Ascending aorta (tissue), 2 donors: ENCODE measurements at regions of chr16 and their contacts with region 1.

Region 1: GRCh38 chr16:46883690-46884512 is at the start of gene GPT2:
- DNase-seq: peak; percentile 87 to 99
- H3K4me3 ChIP-seq: peak within 1 kb of the TSS; percentile 84 to 93
- H3K27ac ChIP-seq: peak within 1 kb of the TSS; percentile 41 to 63
- H3K4me1 ChIP-seq: peaks cover 0 to 6% of the 10 kb centered on the region in 2 donors
- H3K27me3 ChIP-seq: no peaks in the 10 kb centered on the region
- CTCF ChIP-seq: peak in 1 of 3 experiments; percentile 10
- total RNA-seq, gene GPT2: 7.9 TPM

Region 2: GRCh38 chr16:46721885-46722284 is 162.0 kb before region 1 on chr16:
- intact Hi-C with region 1: no loop called
- DNase-seq: no peak
- H3K4me3 ChIP-seq: no peak overlapping the region
- H3K27ac ChIP-seq: no peak overlapping the region
- H3K4me1 ChIP-seq: no peaks in the 10 kb centered on the region
- H3K27me3 ChIP-seq: no peaks in the 10 kb centered on the region
- CTCF ChIP-seq: no peak

Region 3: DNA sequence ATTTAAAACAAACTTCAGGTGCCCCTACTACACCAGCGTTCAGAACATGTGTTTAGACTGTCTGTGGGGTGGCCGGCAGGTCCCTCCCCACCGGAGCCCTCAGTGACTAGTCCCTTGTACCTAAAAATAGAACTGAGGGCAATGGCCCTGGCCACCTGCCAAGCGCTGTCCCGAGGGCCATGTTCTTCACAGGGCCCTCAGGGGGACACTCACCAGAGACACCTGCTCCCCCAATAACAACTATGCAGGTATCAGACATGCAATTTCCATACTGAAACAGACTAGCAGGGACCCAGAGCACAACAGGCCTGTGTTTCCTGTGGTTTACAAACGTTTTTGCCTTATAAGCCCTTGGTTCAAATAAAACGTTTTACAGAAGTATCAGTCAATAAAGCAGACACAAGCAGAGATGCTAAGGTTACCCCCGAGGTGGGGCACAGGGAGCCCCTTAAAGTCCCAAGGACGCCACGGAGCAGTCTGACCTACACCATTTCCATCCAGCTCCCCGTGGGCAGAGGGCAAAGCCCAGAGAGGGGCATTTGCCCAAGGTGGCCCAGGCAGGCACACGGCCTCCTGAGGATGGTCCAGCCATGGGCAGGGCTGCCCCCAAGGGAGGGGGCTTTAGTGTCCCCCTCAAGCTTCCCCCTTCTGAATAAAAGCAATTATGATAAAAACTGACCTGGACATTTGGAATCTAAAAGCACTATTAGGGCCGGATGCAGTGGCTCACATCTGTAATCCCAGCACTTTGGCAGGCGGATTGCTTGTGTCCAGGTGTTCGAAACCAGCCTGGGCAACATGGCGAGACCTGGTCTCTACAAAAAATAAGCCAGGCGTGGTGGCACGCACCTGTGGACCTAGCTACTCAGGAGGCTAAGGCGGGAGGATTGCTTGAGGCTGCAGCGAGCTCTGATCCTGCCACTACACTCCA is 134.9 kb before region 1 on chr16:
- intact Hi-C with region 1: no loop called
- DNase-seq: no peak
- H3K4me3 ChIP-seq: no peak overlapping the region
- H3K27ac ChIP-seq: no peak overlapping the region
- H3K4me1 ChIP-seq: no peaks in the 10 kb centered on the region
- H3K27me3 ChIP-seq: no peaks in the 10 kb centered on the region
- CTCF ChIP-seq: no peak

Region 4: GRCh38 chr16:46853713-46854443 is 30.0 kb before region 1 on chr16:
- intact Hi-C with region 1: loop called (anchors 2 kb)
- DNase-seq: peak in 1 of 2 donors; percentile 73
- H3K4me3 ChIP-seq: no peak overlapping the region
- H3K27ac ChIP-seq: no peak overlapping the region
- H3K4me1 ChIP-seq: peaks cover 0 to 3% of the 10 kb centered on the region in 2 donors
- H3K27me3 ChIP-seq: no peaks in the 10 kb centered on the region
- CTCF ChIP-seq: peak; percentile 55 to 87 (median 80)

Region 5: GRCh38 chr16:46973207-46973995 is 89.5 kb after region 1 on chr16 and contains the start of gene DNAJA2:
- intact Hi-C with region 1: loop called (anchors 1 kb)
- DNase-seq: peak; percentile 47 to 94
- H3K4me3 ChIP-seq: peak within 1 kb of the TSS; percentile 87
- H3K27ac ChIP-seq: peak within 1 kb of the TSS; percentile 93 to 96
- H3K4me1 ChIP-seq: peaks cover 10 to 15% of the 10 kb centered on the region in 2 donors
- H3K27me3 ChIP-seq: no peaks in the 10 kb centered on the region
- CTCF ChIP-seq: no peak
- total RNA-seq, gene DNAJA2: 15.8 TPM

Region 6: DNA sequence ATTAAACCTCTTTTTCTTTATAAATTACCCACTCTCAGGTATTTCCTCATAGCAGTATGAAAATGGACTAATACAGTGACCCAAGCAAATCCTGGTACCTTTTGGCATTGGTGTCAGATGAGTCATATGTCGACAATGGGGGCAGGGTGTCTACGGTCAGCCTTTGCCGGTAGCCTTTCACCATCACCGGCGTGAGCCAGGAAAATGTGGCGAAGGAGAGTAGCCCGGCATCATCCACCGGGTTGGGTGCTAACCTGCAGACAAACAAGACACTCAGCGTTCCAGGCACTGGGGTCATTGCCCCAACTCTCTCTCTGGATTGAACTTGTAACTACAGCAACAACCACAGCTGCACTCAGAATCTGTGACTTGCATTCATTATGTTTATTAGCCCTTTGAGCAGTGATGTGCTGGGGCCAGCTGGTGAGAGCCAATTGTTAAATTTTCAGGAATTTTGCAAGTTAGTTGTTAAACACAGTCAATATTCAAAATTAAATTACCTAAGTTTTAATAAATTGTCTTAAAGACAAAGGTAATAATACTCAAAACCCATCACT is 1260.0 kb after region 1 on chr16:
- intact Hi-C with region 1: no loop called
- DNase-seq: no peak
- H3K4me3 ChIP-seq: no peak overlapping the region
- H3K27ac ChIP-seq: no peak overlapping the region
- H3K4me1 ChIP-seq: no peaks in the 10 kb centered on the region
- H3K27me3 ChIP-seq: no peaks in the 10 kb centered on the region
- CTCF ChIP-seq: no peak